WTC11 (cell line): ENCODE measurements at regions of chr17 and their contacts with region 1.

Region 1: GRCh38 chr17:56592487-56593085 is 913 bp upstream of the NOG start:
- DNase-seq: peak; percentile 77
- ATAC-seq: peak; percentile 49
- H3K4me3 Mint-ChIP-seq: peak overlapping the region; percentile 73
- H3K27ac Mint-ChIP-seq: no peak overlapping the region
- H3K4me1 Mint-ChIP-seq: peaks cover 15% of the 10 kb centered on the region
- H3K27me3 Mint-ChIP-seq: peaks cover 58% of the 10 kb centered on the region
- CTCF ChIP-seq: peak; percentile 96

Region 2: GRCh38 chr17:56222255-56222654 is 370.3 kb before region 1 on chr17:
- CTCF ChIA-PET with region 1: no interaction called
- POLR2A ChIA-PET with region 1: no interaction called
- DNase-seq: no peak
- ATAC-seq: no peak
- H3K4me3 Mint-ChIP-seq: no peak overlapping the region
- H3K27ac Mint-ChIP-seq: no peak overlapping the region
- H3K4me1 Mint-ChIP-seq: peaks cover 6% of the 10 kb centered on the region
- H3K27me3 Mint-ChIP-seq: no peaks in the 10 kb centered on the region
- CTCF ChIP-seq: no peak

Region 3: DNA sequence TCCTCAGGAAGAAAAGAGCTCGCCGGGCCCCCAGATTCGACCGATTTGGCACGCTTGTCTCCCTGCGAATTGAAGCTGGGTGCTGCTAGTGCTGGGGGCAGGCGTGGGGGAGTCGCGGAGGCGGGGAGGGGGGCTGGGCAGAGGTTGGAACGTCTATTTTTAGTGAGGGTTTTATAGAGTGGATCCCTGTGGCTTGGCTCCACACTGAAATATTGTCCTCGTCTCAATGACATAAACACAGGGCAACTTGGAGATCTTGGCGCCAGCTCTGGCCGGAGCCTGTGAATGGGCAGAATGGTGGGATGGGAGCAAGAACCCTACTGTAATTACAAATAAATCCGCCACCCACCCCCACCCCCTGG is 14.8 kb before region 1 on chr17:
- CTCF ChIA-PET with region 1: interaction called, 16 read pairs
- POLR2A ChIA-PET with region 1: no interaction called
- DNase-seq: no peak
- ATAC-seq: no peak
- H3K4me3 Mint-ChIP-seq: peak overlapping the region; percentile 12; the same call in 1 of the 2 replicates
- H3K27ac Mint-ChIP-seq: no peak overlapping the region
- H3K4me1 Mint-ChIP-seq: peaks cover 23% of the 10 kb centered on the region
- H3K27me3 Mint-ChIP-seq: no peaks in the 10 kb centered on the region
- CTCF ChIP-seq: no peak

Region 4: DNA sequence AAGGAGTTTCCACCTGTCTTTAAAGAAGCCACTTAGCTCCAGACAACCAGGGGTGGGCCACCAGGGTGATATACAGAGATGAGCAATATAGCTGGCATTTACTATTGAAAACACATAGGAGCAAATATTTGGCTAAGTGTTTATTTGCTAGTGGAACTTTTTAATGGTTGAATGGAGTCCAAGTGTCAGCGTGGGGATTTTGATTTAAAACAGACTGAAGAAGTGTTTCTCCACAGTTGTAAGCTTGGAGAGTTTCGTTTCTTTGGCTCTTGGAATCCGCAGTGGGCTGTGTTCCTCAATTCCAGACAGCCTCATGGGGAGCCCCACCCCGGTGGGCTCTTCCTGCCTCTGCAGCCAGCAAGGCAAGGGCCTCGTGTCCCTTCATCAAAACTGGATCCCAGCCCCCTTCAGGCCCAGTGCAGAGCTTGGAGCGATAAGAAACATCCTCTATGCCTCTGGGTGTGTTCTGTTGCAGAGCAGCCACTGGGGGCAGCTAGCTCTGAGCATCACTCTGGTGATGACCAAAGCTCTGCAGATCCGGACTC is 37.0 kb after region 1 on chr17:
- CTCF ChIA-PET with region 1: interaction called, 21 read pairs
- POLR2A ChIA-PET with region 1: no interaction called
- DNase-seq: peak; percentile 62
- ATAC-seq: peak; percentile 99
- H3K4me3 Mint-ChIP-seq: no peak overlapping the region
- H3K27ac Mint-ChIP-seq: no peak overlapping the region
- H3K4me1 Mint-ChIP-seq: peaks cover 12% of the 10 kb centered on the region
- H3K27me3 Mint-ChIP-seq: no peaks in the 10 kb centered on the region; the same call in 1 of the 2 replicates
- CTCF ChIP-seq: no peak

Region 5: GRCh38 chr17:56653877-56654276 is 61.3 kb after region 1 on chr17:
- CTCF ChIA-PET with region 1: interaction called, 20 read pairs
- POLR2A ChIA-PET with region 1: interaction called, 3 read pairs
- DNase-seq: peak; percentile 63
- ATAC-seq: peak; percentile 99
- H3K4me3 Mint-ChIP-seq: no peak overlapping the region
- H3K27ac Mint-ChIP-seq: no peak overlapping the region
- H3K4me1 Mint-ChIP-seq: peaks cover 8% of the 10 kb centered on the region
- H3K27me3 Mint-ChIP-seq: peaks cover 4% of the 10 kb centered on the region
- CTCF ChIP-seq: peak; percentile 43; the same call in 1 of the 2 replicates

Region 6: DNA sequence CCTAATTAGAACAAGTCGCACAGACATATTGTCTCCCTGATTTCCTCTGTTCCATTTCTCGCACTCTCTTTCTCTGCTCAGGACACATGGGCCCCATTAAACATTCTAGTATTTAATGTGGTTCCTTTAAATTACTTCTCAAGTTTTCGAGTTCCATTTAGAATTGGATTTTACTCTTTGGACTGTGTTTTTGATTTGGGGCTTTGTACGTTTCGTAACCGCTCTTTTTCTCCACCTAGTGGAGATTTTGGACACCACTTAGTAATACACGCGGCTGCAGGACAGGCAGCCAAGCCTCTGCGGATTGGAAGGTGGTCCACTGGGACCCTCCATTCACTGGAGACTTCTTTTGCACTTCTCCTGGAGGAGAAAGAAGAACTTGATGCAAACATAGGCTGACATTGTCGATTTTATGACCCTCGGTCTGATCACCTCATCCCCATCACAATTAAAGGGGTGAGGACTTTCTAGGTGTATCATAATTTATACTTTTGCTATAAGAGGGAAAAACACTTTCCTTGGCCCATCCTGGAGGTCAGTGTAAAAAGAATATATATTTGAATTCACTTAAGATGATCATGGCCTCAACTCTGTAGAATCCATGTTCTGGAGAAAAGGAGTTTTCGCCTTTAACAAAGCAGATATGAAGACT is 86.7 kb after region 1 on chr17:
- CTCF ChIA-PET with region 1: interaction called, 33 read pairs
- POLR2A ChIA-PET with region 1: interaction called, 4 read pairs
- DNase-seq: no peak
- ATAC-seq: peak; percentile 75
- H3K4me3 Mint-ChIP-seq: peak overlapping the region; percentile 85
- H3K27ac Mint-ChIP-seq: no peak overlapping the region
- H3K4me1 Mint-ChIP-seq: peaks cover 9% of the 10 kb centered on the region
- H3K27me3 Mint-ChIP-seq: no peaks in the 10 kb centered on the region; the same call in 1 of the 2 replicates
- CTCF ChIP-seq: peak; percentile 41; the same call in 1 of the 2 replicates

Region 7: DNA sequence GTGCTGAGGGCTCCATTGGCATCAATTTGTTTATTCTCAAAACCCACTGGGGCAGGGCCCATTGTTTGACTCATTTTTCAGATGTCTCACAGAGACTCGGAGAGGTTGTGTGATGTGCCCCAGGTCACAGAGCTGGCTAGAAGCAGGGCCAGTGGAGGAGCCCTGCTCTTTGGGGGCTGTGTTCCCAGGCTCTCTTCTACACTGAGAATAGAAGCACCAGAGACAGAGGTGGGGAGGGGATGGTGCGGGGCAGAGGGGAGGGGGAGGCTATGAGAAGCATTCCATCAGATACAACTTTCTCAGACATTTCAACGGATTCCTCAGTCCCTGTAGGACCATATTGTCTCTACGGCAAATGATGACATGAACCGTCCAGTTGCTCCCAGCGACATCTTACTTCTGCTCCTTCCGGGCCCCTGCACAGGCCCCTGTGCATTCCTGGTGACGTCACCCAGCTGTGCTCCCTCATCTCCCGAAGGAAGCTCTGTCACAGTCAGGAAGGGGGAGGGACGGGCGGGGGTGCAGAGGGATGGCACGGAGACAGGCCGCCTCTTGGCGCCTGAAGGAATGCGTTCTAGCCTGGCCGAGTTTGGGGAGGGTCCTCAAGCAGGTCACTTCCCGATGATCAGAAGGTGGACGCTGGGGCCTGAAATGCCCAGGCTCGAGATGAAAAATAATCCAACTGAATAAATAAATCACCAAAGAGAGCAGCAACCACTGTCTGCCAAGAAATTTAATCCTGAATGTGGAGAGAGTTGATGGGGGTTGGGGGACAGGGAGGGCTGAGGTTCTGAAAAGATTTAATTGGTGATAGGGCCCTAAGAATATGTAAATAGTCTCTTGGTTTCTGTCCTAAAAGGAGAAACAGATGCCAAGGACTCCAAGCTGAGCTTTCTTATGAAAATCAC is 115.0 kb after region 1 on chr17:
- CTCF ChIA-PET with region 1: interaction called, 15 read pairs
- POLR2A ChIA-PET with region 1: no interaction called
- DNase-seq: peak; percentile 37
- ATAC-seq: peak; percentile 70
- H3K4me3 Mint-ChIP-seq: peak overlapping the region; percentile 58
- H3K27ac Mint-ChIP-seq: no peak overlapping the region
- H3K4me1 Mint-ChIP-seq: peaks cover 19% of the 10 kb centered on the region
- H3K27me3 Mint-ChIP-seq: no peaks in the 10 kb centered on the region; the same call in 1 of the 2 replicates
- CTCF ChIP-seq: no peak

Region 8: DNA sequence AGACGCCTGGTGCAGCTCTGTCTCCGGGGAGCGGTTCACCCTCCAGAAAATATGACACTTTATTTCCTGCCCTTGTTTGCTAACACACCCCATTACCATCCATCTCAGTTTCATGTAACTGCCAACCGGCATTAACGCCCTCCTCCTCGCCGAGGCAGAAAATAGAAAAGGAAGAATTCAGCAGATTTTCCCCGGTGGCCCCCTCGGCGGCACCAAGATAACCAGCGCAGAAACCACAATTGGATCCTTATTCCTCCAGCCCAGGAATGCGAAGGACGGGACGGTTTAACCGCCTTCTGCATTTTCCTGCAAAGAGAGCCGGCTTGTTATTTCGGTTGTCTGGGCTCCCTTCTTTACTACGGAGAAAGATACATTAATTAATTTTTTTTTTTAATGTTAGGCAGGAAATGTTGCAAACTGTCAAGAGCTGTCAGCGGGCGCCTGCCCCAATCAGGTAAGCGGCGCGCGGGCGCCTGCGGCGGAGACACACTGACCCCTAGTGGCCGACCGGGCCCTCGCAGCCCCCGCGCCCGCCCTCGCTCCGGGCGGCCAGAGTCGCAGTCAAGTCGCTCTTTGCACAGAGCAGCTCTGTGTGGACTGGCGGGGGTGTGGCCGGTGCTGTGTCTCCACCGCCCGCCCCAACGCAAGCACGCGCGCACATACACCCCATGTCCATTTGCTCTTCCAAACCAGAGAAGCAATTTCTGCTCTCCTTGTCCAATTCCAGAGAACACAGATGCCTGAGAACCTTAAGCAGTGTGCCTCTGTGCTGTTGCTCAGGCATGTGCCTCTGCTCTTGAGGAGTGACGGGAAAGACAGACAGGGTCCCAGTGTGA is 187.5 kb after region 1 on chr17:
- CTCF ChIA-PET with region 1: interaction called, 30 read pairs
- POLR2A ChIA-PET with region 1: no interaction called
- DNase-seq: peak; percentile 81
- ATAC-seq: peak; percentile 97
- H3K4me3 Mint-ChIP-seq: peak overlapping the region; percentile 56
- H3K27ac Mint-ChIP-seq: no peak overlapping the region
- H3K4me1 Mint-ChIP-seq: peaks cover 12% of the 10 kb centered on the region
- H3K27me3 Mint-ChIP-seq: peaks cover 48% of the 10 kb centered on the region
- CTCF ChIP-seq: peak; percentile 97